Left ventricle myocardium superior (tissue), 1 donor: ENCODE measurements at regions of chr20 and their contacts with region 1.

Region 1: DNA sequence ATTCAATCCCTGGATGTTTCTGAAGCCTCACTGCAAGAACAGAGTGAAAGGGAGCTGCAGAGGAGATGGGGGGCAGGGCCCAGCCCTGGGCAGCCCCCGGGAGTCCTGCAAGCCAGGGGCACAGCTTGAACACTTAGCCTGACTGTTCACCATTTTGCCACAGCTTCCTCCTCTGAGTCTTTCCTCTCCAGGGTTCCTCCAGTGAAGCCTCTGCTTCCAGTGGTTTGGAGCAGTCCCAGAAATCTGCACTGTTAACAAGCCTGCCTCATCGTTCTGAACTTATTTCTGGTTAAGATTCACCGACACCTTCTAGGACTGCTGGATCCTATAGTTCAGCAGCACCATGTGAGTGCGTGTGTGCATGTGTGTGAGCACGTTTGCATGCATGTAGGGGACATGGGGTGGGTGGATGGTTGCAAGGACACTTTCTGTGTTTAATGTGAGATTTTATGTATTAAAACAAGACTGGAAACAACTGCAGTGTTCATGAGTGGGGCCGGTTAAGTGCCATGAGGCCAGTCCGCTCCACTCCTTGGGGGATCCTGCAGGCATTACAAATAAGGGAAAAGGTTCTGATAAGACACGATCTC is 24.6 kb downstream of the CEBPB start:
- DNase-seq: no peak
- ATAC-seq: peak; percentile 33

Region 2: DNA sequence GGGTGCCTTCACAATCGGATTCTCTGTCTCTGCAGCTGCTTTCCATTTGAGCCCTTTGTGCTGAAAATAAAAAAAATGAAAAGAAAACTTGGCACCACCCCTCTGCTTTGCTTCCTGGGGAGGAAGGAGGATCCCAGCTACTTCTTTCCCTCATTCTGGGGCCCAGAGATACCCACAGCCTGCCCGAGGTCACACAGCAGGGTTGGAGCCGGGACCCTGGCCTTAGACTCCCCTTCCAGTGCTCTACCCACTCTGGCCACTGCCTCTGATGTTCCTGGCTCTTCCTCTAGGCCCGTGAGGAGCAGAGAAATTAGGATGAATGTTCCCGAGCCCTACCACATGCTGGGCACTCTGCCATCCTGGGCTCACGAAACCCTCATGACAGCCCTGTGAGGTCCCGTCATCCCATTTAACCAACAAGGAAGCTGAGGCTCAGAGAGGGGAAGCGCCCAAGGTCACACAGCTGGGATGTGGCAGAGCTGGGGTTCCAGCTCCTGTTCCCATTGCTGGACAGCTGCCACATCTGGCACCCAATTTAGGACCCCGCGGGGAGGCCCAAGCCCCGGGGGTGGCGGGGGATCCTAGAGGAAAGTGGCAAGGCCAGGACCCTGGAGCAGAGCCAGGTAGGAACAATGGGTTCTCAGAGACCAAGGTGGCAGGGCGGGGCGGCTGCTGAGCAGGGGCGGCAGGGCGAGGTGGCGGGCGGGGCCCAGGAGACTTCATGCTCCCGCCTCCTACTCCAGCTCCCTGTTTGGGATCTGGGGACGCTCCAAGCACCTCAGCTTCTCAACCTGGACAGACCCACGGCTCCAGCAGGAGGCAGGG is 52.1 kb after region 1 on chr20:
- intact Hi-C with region 1: loop called (anchors 10 kb)
- DNase-seq: peak; percentile 70
- ATAC-seq: peak; percentile 58